PC-3 (cell line): ENCODE measurements at regions of chr19 and their contacts with region 1.

Region 1: DNA sequence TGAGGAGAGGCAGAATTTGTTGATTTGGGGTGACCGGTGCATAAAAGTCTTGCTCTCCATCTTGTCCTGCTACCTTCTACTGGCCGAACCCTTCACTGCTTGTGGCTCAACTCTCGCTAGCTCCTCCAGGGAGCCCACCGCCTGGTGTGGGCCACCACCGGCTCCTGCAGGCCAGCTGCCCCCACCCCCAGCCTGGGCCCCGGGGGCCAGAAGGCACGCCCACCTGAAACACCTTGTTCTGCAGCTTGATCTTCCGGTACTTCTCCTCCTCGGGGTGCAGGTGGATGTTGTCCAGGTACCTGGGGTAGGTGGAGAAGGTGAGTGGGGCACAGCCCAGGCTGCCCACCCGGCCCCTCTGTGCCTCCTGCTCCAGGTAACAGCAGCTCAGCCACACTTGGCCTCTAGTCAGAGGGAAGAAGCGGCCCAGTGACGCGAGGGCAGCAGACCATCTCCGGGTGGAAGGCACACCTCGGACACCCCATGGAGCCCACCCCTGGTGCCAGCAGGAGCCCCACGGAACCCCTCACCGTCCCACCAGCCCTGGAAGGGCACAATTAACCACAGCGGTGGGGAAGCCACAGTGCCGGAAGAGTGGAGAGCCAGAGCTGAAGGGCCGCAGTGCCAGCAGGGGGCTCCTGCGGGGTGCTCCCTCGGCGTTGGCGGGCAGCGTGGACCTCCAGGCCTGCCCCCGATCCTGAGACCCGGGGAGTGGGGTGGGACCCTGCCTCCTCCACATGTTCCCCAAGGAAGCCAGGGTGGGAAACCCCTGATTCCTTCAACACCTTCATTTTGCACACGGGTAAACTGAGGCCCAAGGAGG is 10.1 kb downstream of the UBXN6 start:
- DNase-seq: no peak
- ATAC-seq: no peak
- H3K4me3 ChIP-seq: no peak overlapping the region
- H3K27ac ChIP-seq: no peak overlapping the region
- H3K4me1 ChIP-seq: no peaks in the 10 kb centered on the region
- H3K27me3 ChIP-seq: no peaks in the 10 kb centered on the region
- CTCF ChIP-seq: no peak

Region 2: DNA sequence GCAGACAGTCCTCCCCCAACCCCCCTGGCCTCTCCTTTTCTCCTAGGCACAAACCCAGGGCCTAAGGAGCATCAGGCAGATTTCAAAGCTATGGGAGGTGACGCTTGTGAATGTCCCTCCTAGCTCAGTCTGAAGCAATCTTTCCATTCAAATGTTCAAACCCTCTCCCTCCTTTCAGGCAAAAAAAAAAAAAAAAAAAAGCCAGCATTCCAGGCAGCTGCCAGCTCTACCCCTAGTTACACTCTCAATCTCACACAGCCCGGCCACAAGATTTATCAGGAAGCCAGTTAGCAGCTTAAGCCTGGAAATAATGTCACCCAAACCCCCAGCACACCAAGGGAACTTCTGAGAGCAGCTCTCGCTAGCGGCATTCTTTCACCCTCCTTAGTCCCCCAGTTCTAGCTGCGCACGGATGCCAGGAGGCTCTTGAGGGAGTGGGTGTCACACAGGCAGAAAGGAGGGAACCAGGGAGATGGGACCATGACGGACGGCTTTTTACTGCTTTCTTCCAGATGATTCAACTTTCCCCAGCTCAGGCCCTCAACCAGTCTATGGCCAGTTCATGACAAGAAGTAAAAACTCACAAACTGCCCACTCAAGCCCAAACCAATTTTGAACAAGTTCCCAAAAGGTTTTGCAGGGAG is 53.5 kb before region 1 on chr19:
- CTCF ChIA-PET with region 1: no interaction called
- POLR2A ChIA-PET with region 1: interaction called, 14 read pairs
- intact Hi-C with region 1: no loop called
- DNase-seq: no peak
- ATAC-seq: no peak
- H3K4me3 ChIP-seq: no peak overlapping the region
- H3K27ac ChIP-seq: no peak overlapping the region
- H3K4me1 ChIP-seq: peaks cover 11% of the 10 kb centered on the region
- H3K27me3 ChIP-seq: no peaks in the 10 kb centered on the region
- CTCF ChIP-seq: no peak

Region 3: DNA sequence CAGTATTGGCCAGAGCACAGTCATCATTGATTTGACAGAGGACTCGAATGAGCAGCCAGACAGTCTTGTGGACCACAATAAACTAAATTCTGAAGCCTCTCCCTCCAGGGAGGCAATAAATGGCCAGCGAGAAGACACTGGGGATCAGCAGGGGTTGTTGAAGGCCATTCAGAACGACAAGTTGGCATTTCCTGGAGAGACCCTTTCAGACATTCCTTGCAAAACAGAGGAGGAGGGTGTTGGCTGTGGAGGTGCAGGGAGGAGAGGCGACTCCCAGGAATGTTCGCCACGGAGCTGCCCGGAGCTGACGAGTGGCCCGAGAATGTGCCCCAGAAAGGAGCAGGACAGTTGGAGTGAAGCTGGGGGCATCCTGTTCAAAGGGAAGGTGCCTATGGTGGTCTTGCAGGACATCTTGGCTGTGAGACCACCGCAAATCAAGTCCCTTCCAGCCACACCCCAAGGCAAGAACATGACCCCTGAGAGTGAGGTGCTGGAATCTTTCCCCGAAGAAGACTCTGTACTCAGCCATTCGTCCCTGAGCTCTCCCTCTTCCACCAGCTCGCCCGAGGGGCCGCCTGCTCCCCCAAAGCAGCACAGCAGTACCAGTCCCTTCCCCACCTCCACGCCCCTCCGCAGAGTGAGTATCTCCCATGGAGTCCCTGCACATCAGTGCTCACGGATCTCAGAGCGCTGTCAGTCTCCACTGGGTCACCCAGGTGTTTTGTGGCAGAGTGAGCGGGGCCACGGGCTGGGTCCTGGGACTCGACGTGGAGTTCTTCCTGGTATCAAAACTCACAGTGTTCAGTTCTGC is 38.2 kb before region 1 on chr19:
- CTCF ChIA-PET with region 1: no interaction called
- POLR2A ChIA-PET with region 1: no interaction called
- intact Hi-C with region 1: no loop called
- DNase-seq: no peak
- ATAC-seq: no peak
- H3K4me3 ChIP-seq: no peak overlapping the region
- H3K27ac ChIP-seq: no peak overlapping the region
- H3K4me1 ChIP-seq: peaks cover 9% of the 10 kb centered on the region; the same call in 1 of the 2 replicates
- H3K27me3 ChIP-seq: no peaks in the 10 kb centered on the region
- CTCF ChIP-seq: no peak

Region 4: GRCh38 chr19:4482721-4483364 is 35.3 kb after region 1 on chr19:
- CTCF ChIA-PET with region 1: no interaction called
- POLR2A ChIA-PET with region 1: no interaction called
- intact Hi-C with region 1: no loop called
- DNase-seq: no peak
- ATAC-seq: no peak
- H3K4me3 ChIP-seq: no peak overlapping the region
- H3K27ac ChIP-seq: no peak overlapping the region
- H3K4me1 ChIP-seq: no peaks in the 10 kb centered on the region
- H3K27me3 ChIP-seq: no peaks in the 10 kb centered on the region
- CTCF ChIP-seq: no peak

Region 5: GRCh38 chr19:4524808-4525562 is 77.4 kb after region 1 on chr19:
- CTCF ChIA-PET with region 1: no interaction called
- POLR2A ChIA-PET with region 1: no interaction called
- intact Hi-C with region 1: no loop called
- DNase-seq: peak; percentile 70
- ATAC-seq: peak; percentile 77
- H3K4me3 ChIP-seq: no peak overlapping the region
- H3K27ac ChIP-seq: no peak overlapping the region
- H3K4me1 ChIP-seq: peaks cover 10% of the 10 kb centered on the region; the same call in 1 of the 2 replicates
- H3K27me3 ChIP-seq: no peaks in the 10 kb centered on the region
- CTCF ChIP-seq: peak; percentile 79